MCF 10A (cell line): ENCODE measurements at regions of chr13 and their contacts with region 1.

Region 1: DNA sequence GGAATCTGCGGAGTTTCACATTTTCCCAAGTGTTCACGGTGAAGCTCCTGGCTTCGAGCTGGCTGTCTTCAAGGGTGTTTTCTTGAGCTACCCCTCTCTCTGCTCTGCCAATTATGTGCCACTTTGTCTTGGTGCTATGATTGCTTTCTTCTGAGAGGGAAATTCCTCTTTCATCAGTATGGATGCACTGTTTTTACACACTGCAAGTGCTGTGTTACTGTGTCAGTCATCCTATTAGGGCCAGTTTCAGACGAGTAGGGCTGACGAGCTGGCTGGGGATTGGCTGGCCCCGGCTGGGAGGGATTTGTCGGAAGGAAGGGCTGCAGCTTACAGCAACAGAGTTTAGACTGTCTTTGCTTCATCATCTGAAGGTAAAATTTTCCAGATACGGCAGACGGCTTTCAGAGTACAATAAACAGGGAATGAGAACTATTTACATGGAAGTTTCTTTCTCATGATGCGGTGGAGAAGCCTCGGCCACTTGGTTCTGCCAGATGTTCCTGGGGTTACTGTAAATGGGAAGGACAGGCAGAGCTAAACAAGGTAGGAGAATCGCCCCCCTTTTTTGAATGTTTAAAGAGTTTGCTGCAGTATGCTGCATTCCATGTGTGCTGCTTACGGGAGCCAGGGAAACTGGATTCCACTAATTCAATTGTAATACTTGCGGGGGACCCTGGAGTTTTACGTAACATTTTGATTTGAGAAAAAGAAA is at the start of gene MBNL2:
- DNase-seq: peak; percentile 97
- H3K4me3 Mint-ChIP-seq: peak within 1 kb of the TSS; percentile 91
- H3K27ac Mint-ChIP-seq: peak within 1 kb of the TSS; percentile 94
- H3K4me1 Mint-ChIP-seq: peaks cover 29% of the 10 kb centered on the region
- H3K27me3 Mint-ChIP-seq: no peaks in the 10 kb centered on the region
- CTCF ChIP-seq: no peak
- total RNA-seq, gene MBNL2: 74.3 and 85.8 TPM in 2 replicates

Region 2: GRCh38 chr13:97116754-97117153 is 105.4 kb before region 1 on chr13:
- CTCF ChIA-PET with region 1: interaction called, 114 read pairs
- POLR2A ChIA-PET with region 1: interaction called, 54 read pairs
- intact Hi-C with region 1: loop called (anchors 2 kb)
- DNase-seq: peak; percentile 60
- H3K4me3 Mint-ChIP-seq: no peak overlapping the region
- H3K27ac Mint-ChIP-seq: no peak overlapping the region
- H3K4me1 Mint-ChIP-seq: peaks cover 24% of the 10 kb centered on the region
- H3K27me3 Mint-ChIP-seq: peaks cover 19% of the 10 kb centered on the region
- CTCF ChIP-seq: no peak

Region 3: DNA sequence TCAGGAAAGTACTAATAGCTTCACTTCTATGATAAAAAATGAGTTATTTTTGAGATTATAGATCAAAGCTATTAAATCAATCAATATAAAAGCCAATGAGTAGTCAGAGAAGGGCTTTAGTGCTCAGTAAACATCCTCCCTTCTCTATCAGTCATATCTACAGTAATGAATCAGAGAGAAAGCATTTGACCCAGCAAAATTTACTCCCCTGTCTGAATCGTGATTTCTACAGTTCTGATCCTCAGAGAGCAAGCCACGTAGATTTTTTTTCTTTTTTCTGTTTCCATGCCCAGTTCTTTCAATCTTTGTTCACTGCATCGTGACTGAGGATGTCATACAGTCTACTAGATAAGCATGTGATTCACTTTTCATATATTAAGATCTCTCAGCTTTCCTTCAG is 16.2 kb before region 1 on chr13:
- CTCF ChIA-PET with region 1: interaction called, 93 read pairs
- POLR2A ChIA-PET with region 1: interaction called, 20 read pairs
- intact Hi-C with region 1: no loop called
- DNase-seq: no peak
- H3K4me3 Mint-ChIP-seq: no peak overlapping the region
- H3K27ac Mint-ChIP-seq: no peak overlapping the region
- H3K4me1 Mint-ChIP-seq: no peaks in the 10 kb centered on the region
- H3K27me3 Mint-ChIP-seq: no peaks in the 10 kb centered on the region
- CTCF ChIP-seq: no peak

Region 4: DNA sequence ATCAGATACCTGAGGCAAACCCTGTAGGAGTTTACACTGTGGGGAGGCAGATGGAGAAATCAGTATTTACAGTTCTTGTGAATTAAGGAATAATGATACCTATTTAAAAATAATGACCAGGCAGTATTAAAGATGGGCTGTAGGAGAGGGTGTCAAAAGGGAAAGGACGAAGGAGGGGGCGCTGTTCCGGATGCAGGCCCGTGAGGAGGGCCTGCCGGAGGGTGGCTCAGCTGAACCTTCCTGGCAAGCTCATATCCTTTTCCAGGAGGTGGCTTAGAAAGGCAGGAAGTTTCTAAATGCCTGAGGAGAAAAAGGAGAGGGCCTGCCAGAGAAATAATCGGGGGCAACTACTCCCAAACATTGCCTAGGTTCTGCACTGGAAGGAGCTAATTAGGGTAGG is 46.6 kb after region 1 on chr13:
- CTCF ChIA-PET with region 1: interaction called, 28 read pairs
- POLR2A ChIA-PET with region 1: interaction called, 211 read pairs
- intact Hi-C with region 1: no loop called
- DNase-seq: peak; percentile 27
- H3K4me3 Mint-ChIP-seq: no peak overlapping the region
- H3K27ac Mint-ChIP-seq: peak overlapping the region; percentile 83
- H3K4me1 Mint-ChIP-seq: peaks cover 34% of the 10 kb centered on the region
- H3K27me3 Mint-ChIP-seq: no peaks in the 10 kb centered on the region
- CTCF ChIP-seq: no peak

Region 5: DNA sequence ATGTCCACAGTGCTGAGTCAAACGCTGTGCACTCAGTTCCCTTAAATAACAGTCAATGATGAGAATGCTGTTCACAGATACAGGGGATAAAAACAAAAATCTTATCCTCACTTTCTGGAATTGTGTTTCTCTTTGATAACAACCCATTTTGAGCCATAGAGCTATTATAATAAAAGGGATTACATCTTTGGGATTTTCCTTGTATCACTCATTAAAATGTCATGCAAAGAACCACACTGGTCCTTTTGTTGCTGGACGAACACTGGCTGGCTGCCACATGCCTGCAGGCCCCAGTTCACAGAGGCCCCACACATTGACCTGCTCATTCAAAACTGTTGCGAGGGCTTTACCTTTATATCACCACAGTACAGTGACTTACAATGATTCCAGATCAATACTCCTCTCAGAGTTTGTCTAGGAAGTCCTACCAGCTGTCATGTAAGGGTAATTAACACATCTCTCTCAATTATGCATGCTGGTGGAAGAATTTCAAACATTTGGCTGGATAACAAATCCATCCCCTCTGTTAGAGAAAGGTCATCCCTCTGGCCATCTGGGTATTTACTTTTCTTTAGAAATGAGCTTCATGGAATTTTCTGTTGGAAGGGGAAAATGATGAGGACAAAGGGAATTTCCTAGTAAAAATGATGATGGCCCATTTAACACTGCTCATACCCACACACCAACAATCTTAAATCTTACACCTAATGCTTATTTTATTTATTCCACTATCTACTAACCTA is 85.9 kb after region 1 on chr13:
- CTCF ChIA-PET with region 1: interaction called, 3 read pairs
- POLR2A ChIA-PET with region 1: interaction called, 15 read pairs
- intact Hi-C with region 1: no loop called
- DNase-seq: peak; percentile 60
- H3K4me3 Mint-ChIP-seq: no peak overlapping the region
- H3K27ac Mint-ChIP-seq: no peak overlapping the region
- H3K4me1 Mint-ChIP-seq: peaks cover 23% of the 10 kb centered on the region
- H3K27me3 Mint-ChIP-seq: no peaks in the 10 kb centered on the region
- CTCF ChIP-seq: no peak

Region 6: DNA sequence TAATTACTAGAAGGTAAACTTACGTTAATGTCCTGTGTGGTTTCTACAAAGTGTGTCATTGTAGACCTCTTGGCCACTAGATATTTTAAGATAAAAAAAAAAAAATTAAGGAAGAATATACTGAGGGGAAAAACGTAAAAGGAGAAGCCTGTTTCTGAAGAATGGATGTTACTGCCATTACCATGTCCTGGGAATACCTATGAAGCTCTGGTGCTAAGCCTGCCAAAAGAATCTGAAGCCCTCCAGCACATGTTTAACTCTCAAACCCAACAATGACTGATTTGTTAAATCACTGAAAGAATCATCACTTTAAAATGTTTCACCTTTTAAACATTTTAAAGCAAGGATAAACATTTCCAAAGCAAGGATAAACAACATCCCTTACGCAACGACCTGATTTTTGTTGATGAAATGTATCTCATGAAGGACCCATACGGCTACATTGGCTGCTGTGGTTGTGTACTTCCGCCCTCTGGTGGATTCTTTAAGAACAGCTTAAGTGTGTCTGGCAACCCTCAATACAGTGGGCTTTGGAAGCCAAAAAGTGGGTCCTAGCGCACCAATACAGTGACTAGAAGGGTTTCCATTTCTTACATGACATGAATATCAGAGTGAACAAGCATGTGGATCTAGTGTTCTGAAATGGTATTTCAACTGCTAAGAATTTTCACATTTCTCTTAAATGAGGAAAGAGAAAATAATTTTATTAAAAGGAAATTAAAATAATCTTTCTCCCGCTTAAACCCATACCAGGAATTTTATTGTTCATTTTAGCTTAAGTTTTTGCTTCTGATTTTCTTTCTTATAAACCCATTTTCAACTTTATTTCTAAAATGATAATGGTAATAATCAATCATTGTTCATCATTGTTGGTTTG is 137.3 kb after region 1 on chr13:
- CTCF ChIA-PET with region 1: interaction called, 21 read pairs
- POLR2A ChIA-PET with region 1: interaction called, 51 read pairs
- intact Hi-C with region 1: loop called (anchors 1 kb)
- DNase-seq: peak; percentile 87
- H3K4me3 Mint-ChIP-seq: no peak overlapping the region
- H3K27ac Mint-ChIP-seq: peak overlapping the region; percentile 49
- H3K4me1 Mint-ChIP-seq: no peaks in the 10 kb centered on the region
- H3K27me3 Mint-ChIP-seq: no peaks in the 10 kb centered on the region
- CTCF ChIP-seq: peak; percentile 96